Left ventricle myocardium inferior (tissue), 1 donor: ENCODE measurements at regions of chr10 and their contacts with region 1.

Region 1: GRCh38 chr10:38025283-38025682 is 14.8 kb downstream of the ZNF33A start:
- DNase-seq: no peak
- H3K4me3 ChIP-seq: no peak overlapping the region
- H3K27ac ChIP-seq: no peak overlapping the region
- H3K4me1 ChIP-seq: no peaks in the 10 kb centered on the region
- H3K27me3 ChIP-seq: no peaks in the 10 kb centered on the region
- CTCF ChIP-seq: no peak

Region 2: GRCh38 chr10:37456456-37456855 is 568.8 kb before region 1 on chr10:
- intact Hi-C with region 1: no loop called
- DNase-seq: no peak
- H3K4me3 ChIP-seq: no peak overlapping the region
- H3K27ac ChIP-seq: no peak overlapping the region
- H3K4me1 ChIP-seq: no peaks in the 10 kb centered on the region
- H3K27me3 ChIP-seq: peaks cover 16% of the 10 kb centered on the region
- CTCF ChIP-seq: no peak

Region 3: DNA sequence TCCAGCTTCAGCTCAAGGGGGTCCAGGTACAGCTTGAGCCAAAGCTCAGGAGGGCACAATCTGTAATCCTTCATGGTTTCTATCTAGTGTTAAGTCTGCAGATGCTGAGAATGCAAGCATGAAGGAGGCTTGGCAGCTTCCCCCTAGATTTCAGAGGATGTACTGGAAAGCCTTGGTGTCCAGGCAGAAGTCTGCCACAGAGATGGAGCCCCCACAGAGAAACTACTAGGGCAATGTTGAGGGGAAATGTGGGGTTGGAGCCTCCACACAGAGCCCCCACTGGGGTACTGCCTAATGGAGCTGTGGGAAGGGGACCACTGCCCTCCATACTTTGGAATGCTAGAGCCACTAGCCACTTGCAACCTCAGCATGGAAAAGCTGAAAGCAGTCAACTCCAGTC is 60.3 kb before region 1 on chr10:
- intact Hi-C with region 1: no loop called
- DNase-seq: no peak
- H3K4me3 ChIP-seq: no peak overlapping the region
- H3K27ac ChIP-seq: no peak overlapping the region
- H3K4me1 ChIP-seq: no peaks in the 10 kb centered on the region
- H3K27me3 ChIP-seq: no peaks in the 10 kb centered on the region
- CTCF ChIP-seq: no peak

Region 4: GRCh38 chr10:38094158-38094920 is 69.1 kb after region 1 on chr10 and contains the start of gene ZNF37A:
- intact Hi-C with region 1: loop called (anchors 10 kb)
- DNase-seq: peak; percentile 93
- H3K4me3 ChIP-seq: peak within 1 kb of the TSS; percentile 82
- H3K27ac ChIP-seq: peak within 1 kb of the TSS; percentile 87
- H3K4me1 ChIP-seq: peaks cover 20% of the 10 kb centered on the region
- H3K27me3 ChIP-seq: no peaks in the 10 kb centered on the region
- CTCF ChIP-seq: no peak
- total RNA-seq, gene ZNF37A: 8.9 TPM